Naive thymus-derived CD4-positive, alpha-beta T cell (primary cell): ENCODE measurements at regions of chr9 and their contacts with region 1.

Region 1: DNA sequence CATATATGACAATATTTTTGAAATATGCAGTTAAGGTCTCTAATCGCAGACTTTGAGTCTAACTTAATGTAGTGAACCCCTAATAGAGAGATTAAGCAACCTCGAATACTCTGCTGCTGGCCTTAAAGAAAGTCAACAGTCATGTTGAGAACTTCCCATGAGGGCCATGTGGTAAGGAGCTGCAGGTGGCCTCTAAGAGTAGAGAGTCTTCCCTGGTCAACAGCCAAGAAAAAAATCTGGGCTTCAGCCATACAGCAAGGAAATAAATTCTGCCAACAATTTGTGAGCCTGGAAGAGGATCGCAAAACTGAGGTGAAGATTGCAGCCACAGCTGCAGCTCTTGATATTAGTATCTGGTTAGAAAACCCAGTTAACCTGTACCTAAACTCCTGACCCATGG is 935.2 kb upstream of the TYRP1 start:
- DNase-seq: no peak
- ATAC-seq: no peak
- H3K4me3 ChIP-seq: no peak overlapping the region
- H3K4me3 Mint-ChIP-seq: no peak overlapping the region
- H3K27ac ChIP-seq: no peak overlapping the region
- H3K27ac Mint-ChIP-seq: no peak overlapping the region
- H3K4me1 ChIP-seq: no peaks in the 10 kb centered on the region
- H3K4me1 Mint-ChIP-seq: no peaks in the 10 kb centered on the region
- H3K27me3 ChIP-seq: no peaks in the 10 kb centered on the region
- H3K27me3 Mint-ChIP-seq: no peaks in the 10 kb centered on the region

Region 2: GRCh38 chr9:11686733-11687132 is 71.3 kb before region 1 on chr9:
- CTCF ChIA-PET with region 1: no interaction called
- POLR2A ChIA-PET with region 1: no interaction called
- intact Hi-C with region 1: no loop called
- DNase-seq: no peak
- ATAC-seq: no peak
- H3K4me3 ChIP-seq: no peak overlapping the region
- H3K4me3 Mint-ChIP-seq: no peak overlapping the region
- H3K27ac ChIP-seq: no peak overlapping the region
- H3K27ac Mint-ChIP-seq: no peak overlapping the region
- H3K4me1 ChIP-seq: no peaks in the 10 kb centered on the region
- H3K4me1 Mint-ChIP-seq: no peaks in the 10 kb centered on the region
- H3K27me3 ChIP-seq: no peaks in the 10 kb centered on the region
- H3K27me3 Mint-ChIP-seq: no peaks in the 10 kb centered on the region

Region 3: GRCh38 chr9:11702548-11702947 is 55.5 kb before region 1 on chr9:
- CTCF ChIA-PET with region 1: no interaction called
- POLR2A ChIA-PET with region 1: no interaction called
- intact Hi-C with region 1: loop called in 1 of 2 experiments (anchors 5 kb)
- DNase-seq: no peak
- ATAC-seq: no peak
- H3K4me3 ChIP-seq: no peak overlapping the region
- H3K4me3 Mint-ChIP-seq: no peak overlapping the region
- H3K27ac ChIP-seq: no peak overlapping the region
- H3K27ac Mint-ChIP-seq: no peak overlapping the region
- H3K4me1 ChIP-seq: no peaks in the 10 kb centered on the region
- H3K4me1 Mint-ChIP-seq: no peaks in the 10 kb centered on the region
- H3K27me3 ChIP-seq: no peaks in the 10 kb centered on the region
- H3K27me3 Mint-ChIP-seq: no peaks in the 10 kb centered on the region

Region 4: DNA sequence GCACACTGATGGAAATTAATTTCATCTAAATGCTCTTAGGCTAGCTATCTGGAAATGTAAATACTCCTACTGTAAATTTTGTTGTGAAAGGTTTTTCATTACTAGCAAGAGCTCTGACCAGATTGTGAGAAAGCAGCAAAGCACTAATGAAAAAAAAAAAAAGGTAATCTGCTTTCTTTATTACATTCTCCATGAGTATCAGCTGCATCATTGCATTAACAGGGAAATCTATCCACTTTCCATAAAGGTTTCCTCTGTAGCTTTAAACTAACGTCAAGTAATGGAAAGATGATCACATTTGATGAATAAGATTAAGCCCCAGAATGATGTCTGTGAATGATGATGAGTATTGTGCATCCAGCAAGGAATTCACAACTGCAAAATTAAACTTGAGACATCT is 144.6 kb after region 1 on chr9:
- CTCF ChIA-PET with region 1: no interaction called
- POLR2A ChIA-PET with region 1: no interaction called
- intact Hi-C with region 1: no loop called
- DNase-seq: no peak
- ATAC-seq: no peak
- H3K4me3 ChIP-seq: no peak overlapping the region
- H3K4me3 Mint-ChIP-seq: no peak overlapping the region
- H3K27ac ChIP-seq: no peak overlapping the region
- H3K27ac Mint-ChIP-seq: no peak overlapping the region
- H3K4me1 ChIP-seq: no peaks in the 10 kb centered on the region
- H3K4me1 Mint-ChIP-seq: no peaks in the 10 kb centered on the region
- H3K27me3 ChIP-seq: no peaks in the 10 kb centered on the region
- H3K27me3 Mint-ChIP-seq: no peaks in the 10 kb centered on the region